ENCODE measurements at regions of chr17 and their contacts with region 1.

Region 1: GRCh38 chr17:37067555-37068111 is 118.9 kb downstream of the AATF start:
- DNase-seq: no peak
- ATAC-seq: no peak
- H3K4me3 ChIP-seq: no peak overlapping the region
- H3K4me3 Mint-ChIP-seq: no peak overlapping the region
- H3K27ac ChIP-seq: no peak overlapping the region
- H3K27ac Mint-ChIP-seq: no peak overlapping the region
- H3K4me1 ChIP-seq: no peaks in the 10 kb centered on the region
- H3K4me1 Mint-ChIP-seq: no peaks in the 10 kb centered on the region
- H3K27me3 ChIP-seq: peaks cover 2 to 8% of the 10 kb centered on the region in 2 experiments
- H3K27me3 Mint-ChIP-seq: no peaks in the 10 kb centered on the region

Region 2: GRCh38 chr17:37179893-37180292 is 112.3 kb after region 1 on chr17:
- CTCF ChIA-PET with region 1: no interaction called
- POLR2A ChIA-PET with region 1: interaction called in 1 of 2 experiments, 13 read pairs
- DNase-seq: no peak
- ATAC-seq: no peak
- H3K4me3 ChIP-seq: no peak overlapping the region
- H3K4me3 Mint-ChIP-seq: no peak overlapping the region
- H3K27ac ChIP-seq: no peak overlapping the region
- H3K27ac Mint-ChIP-seq: no peak overlapping the region
- H3K4me1 ChIP-seq: no peaks in the 10 kb centered on the region
- H3K4me1 Mint-ChIP-seq: no peaks in the 10 kb centered on the region
- H3K27me3 ChIP-seq: no peaks in the 10 kb centered on the region
- H3K27me3 Mint-ChIP-seq: no peaks in the 10 kb centered on the region

Measured in T-cell (primary cell).